ENCODE measurements at regions of chr18 and their contacts with region 1.

Region 1: GRCh38 chr18:63148449-63149301 is 170.9 kb downstream of the BCL2 start:
- DNase-seq: no peak
- H3K4me3 ChIP-seq: no peak overlapping the region
- H3K27ac ChIP-seq: peak overlapping the region in 3 of 4 donors; percentile 23 to 42 (median 30)
- H3K4me1 ChIP-seq: peaks cover 0 to 10% (median 3%) of the 10 kb centered on the region in 4 donors
- H3K27me3 ChIP-seq: no peaks in the 10 kb centered on the region
- CTCF ChIP-seq: no peak
- EP300 ChIP-seq: no peak
- POLR2A ChIP-seq: no peak

Region 2: DNA sequence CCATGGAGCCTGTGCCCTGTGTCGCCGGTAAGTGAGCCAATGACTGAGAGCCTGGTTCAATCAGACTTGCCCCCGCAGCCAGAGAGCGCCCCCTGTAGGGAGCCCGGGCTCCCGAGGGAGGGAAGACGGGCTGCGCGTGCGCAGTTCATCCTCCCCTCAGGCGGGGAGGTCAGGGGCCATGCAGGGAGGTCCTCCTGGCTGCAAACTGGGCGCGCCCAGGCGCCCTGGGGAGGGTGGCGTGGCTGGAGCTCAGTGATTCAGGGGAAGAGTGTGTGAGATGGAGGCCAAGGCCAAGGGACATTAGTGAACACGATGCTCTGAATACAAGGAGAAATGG is 156.7 kb before region 1 on chr18:
- in situ Hi-C with region 1: no loop called
- intact Hi-C with region 1: no loop called
- DNase-seq: no peak
- H3K4me3 ChIP-seq: no peak overlapping the region
- H3K27ac ChIP-seq: no peak overlapping the region
- H3K4me1 ChIP-seq: no peaks in the 10 kb centered on the region
- H3K27me3 ChIP-seq: no peaks in the 10 kb centered on the region
- CTCF ChIP-seq: no peak
- EP300 ChIP-seq: no peak
- POLR2A ChIP-seq: no peak

Region 3: GRCh38 chr18:63119647-63120046 is 29.0 kb before region 1 on chr18:
- in situ Hi-C with region 1: no loop called
- intact Hi-C with region 1: loop called (anchors 1 kb)
- DNase-seq: no peak
- H3K4me3 ChIP-seq: no peak overlapping the region
- H3K27ac ChIP-seq: no peak overlapping the region
- H3K4me1 ChIP-seq: no peaks in the 10 kb centered on the region
- H3K27me3 ChIP-seq: no peaks in the 10 kb centered on the region
- CTCF ChIP-seq: peak in 4 of 5 experiments; percentile 34 to 37 (median 35)
- EP300 ChIP-seq: no peak
- POLR2A ChIP-seq: no peak

Measured in transverse colon (tissue), 4 donors.